ENCODE measurements at regions of chr2 and their contacts with region 1.

Region 1: GRCh38 chr2:127591221-127591923 is 54.6 kb upstream of the GPR17 start:
- DNase-seq: peak; percentile 85

Region 2: DNA sequence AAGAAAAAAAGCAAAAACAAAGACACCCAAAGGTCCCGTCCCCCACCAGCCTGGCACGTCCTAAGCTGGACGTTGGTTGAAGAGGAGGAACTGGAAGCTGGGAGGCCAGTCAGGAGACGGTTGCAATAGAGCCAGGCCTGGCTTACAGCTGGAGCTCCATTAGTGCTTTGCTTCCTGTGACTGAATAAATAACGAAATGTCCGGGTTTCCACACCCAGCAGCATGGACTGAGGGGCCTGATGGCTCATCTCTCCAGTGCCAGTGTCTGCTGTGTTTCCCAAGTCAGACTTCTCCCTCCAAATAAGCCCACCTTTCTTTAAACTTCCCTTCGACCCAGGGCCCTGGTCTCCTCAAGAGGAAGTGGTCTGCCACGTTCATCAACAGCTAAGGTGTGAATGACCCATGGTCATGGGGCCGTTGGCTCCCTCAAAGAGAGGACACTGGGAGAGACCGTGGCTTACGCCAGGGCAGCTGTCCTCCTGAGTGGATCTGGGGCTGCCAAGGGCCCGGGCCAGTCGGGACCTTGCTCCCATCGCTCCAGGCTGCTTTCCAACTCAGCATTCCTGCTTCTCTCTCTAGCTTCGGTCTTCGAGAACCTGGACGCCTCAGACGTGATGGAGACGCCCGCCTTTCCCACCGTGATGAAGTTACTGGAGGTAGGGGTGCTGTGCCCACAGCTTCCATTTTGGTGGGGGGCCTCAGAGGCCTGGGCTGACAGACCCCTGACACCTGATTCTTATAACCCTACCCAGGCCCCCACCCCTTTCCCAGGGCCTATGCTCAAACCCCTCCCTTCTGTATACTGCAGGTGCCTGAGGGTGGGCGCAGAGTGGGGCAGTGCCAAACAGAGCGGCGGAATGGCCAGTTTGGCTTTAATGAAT is 11.0 kb before region 1 on chr2:
- CTCF ChIA-PET with region 1: interaction called, 14 read pairs
- POLR2A ChIA-PET with region 1: interaction called, 4 read pairs
- DNase-seq: no peak

Region 3: GRCh38 chr2:127609031-127609751 is 17.8 kb after region 1 on chr2:
- CTCF ChIA-PET with region 1: interaction called, 12 read pairs
- POLR2A ChIA-PET with region 1: no interaction called
- DNase-seq: no peak

Region 4: DNA sequence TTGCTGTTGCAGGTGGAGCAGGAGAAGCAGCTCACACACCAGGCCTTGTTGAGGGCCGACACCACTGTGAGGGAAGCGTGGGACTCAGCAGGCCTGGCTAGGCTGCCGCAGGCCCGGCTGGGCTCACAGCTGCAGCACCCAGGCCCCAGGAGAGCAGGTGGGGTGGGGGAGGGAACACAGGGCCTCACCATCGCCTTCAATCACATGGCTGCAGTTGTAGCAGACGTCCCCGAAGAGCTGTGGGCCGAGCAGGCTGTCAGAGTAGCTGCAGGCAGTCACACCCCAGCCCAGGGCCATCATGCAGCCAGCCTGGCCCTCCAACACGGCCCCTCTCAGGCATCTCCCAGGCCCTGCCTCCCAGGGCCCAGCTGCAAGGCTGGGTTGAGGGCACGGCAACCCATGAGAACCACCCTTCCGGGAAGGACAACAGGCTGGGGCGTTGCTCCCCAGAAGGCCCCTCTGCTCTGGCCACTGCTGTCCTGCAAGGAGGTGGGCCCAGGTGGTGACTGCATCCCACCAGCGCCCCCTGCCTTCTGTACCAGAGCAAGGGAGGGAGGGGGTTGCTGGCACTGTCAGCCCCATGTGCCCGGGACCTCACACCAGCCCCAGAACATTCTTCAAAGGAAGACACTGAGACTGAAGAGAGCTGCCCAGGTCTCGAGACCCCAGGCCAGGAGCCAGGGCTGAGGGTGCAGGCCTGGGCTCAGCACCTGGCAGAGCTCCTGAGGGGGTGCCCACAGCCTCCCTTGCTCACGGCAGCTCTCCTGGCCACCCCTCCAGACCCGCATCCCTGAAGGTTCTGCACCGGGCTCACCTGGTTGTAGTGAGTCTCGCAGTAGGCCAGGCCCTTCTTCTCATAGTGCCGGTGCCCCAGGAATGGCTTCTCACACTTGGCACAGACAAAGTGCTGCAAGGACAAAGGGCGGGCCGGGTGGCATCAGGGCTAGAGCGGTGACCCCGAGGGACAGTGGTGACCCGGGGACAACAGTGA is 49.0 kb after region 1 on chr2:
- CTCF ChIA-PET with region 1: interaction called, 12 read pairs
- POLR2A ChIA-PET with region 1: no interaction called
- DNase-seq: peak; percentile 22

Region 5: DNA sequence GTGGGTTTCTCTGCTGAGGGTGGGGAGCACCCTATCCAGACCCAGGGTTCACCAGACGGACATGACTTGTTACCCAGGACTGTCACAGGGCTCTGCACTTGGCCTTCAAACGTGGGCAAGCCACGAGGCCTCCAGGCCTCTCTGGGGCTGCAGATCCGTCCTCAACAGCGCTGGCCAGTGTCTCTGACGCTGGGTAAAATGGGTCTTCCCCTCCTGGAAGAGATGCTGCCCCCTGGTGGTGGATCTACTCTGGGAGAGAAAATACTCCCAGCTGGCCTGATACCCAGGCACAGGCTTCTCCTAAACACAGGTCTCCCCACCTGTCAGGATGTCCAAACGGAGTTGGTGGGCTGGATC is 58.3 kb after region 1 on chr2:
- CTCF ChIA-PET with region 1: interaction called, 46 read pairs
- POLR2A ChIA-PET with region 1: no interaction called
- DNase-seq: peak; percentile 85

Region 6: GRCh38 chr2:127776122-127776780 is 184.9 kb after region 1 on chr2:
- CTCF ChIA-PET with region 1: no interaction called
- POLR2A ChIA-PET with region 1: no interaction called
- DNase-seq: no peak

Measured in HEK293T (cell line).